ENCODE measurements at regions of chr4 and their contacts with region 1.

Region 1: DNA sequence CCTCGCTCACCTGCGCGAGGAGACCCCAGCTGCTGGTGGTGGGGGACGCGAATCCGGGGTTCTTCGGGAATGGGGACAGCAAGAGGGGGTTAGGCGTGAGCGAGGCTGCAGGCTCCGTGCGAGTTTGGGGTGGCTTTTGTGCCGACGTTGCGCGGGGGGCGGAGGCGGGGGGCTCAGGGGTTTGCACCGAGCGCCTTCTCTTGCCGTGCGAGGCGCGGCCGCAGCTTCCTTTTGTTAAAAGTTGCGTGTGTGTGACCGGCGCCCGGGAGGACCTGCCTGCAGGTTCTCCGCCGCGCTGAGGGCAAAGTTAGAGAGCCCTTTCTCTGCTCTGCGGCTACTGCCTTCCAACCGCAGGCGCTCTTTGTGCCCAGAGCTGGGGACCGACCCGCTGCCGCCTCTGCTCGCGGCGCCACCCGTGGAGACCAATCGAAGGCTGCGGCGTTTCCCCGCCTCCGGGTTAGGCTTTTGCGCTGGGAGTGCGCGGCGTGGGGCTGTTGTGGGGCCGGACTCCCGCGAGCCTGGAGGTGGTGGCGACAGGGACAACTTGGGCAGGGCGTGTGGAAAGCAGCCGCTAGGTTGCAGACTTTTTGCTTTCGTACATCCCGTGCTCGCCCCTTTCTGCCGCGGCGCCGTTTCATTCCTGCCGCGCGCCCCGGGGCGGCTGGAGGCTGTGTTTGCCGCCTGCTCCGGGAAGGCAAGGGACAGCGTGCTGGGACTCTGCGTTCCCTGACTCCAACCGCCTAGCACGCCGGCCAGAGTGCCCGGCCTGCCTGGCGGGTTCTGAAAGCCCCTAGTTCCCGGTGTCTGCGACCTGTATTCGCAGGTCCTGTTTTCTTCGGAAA is 716 bp downstream of the KIT start:
- DNase-seq: peak; percentile 55 to 76 (median 60)
- ATAC-seq: peak; percentile 93
- H3K4me3 ChIP-seq: peak overlapping the region; percentile 52
- H3K27ac ChIP-seq: no peak overlapping the region
- H3K4me1 ChIP-seq: peaks cover 5 to 23% of the 10 kb centered on the region in 2 experiments; a peak in 3 of 5 replicates
- H3K27me3 ChIP-seq: peaks cover 0 to 21% of the 10 kb centered on the region in 2 experiments; a peak in 4 of 5 replicates
- CTCF ChIP-seq: peak; percentile 44 to 75 (median 58); a peak in 5 of 6 replicates
- EP300 ChIP-seq: no peak
- POLR2A ChIP-seq: no peak
- RAD21 ChIP-seq: peak; percentile 29 to 38; a peak in 3 of 4 replicates

Region 2: DNA sequence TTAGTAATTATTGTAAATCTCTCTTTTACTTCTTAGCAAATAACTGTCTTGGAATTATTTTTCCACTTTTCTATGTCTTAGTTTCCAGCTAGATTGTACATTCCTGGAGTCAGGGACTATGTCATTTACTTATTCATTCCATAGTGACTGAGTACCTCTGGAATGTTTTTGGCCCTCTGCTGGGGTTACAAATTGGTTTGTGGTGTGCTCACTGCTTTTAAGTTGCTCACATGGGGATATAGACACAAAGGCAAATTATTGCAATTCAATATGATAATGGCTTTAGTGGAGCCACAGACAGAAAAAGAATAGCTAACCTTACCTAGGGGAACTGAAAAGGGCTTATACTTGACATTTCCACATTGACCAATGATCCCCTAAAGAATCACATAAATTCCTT is 493.0 kb before region 1 on chr4:
- CTCF ChIA-PET with region 1: no interaction called
- POLR2A ChIA-PET with region 1: no interaction called
- in situ Hi-C with region 1: no loop called
- intact Hi-C with region 1: no loop called
- DNase-seq: no peak
- ATAC-seq: no peak
- H3K4me3 ChIP-seq: no peak overlapping the region
- H3K27ac ChIP-seq: no peak overlapping the region
- H3K4me1 ChIP-seq: no peaks in the 10 kb centered on the region
- H3K27me3 ChIP-seq: no peaks in the 10 kb centered on the region; a peak in 1 of 5 replicates
- CTCF ChIP-seq: no peak
- EP300 ChIP-seq: no peak
- POLR2A ChIP-seq: no peak
- RAD21 ChIP-seq: no peak

Region 3: GRCh38 chr4:54539500-54540029 is 118.9 kb before region 1 on chr4:
- CTCF ChIA-PET with region 1: no interaction called
- POLR2A ChIA-PET with region 1: no interaction called
- in situ Hi-C with region 1: no loop called
- intact Hi-C with region 1: loop called (anchors 5 kb)
- DNase-seq: peak; percentile 20 to 64 (median 24)
- ATAC-seq: peak; percentile 69
- H3K4me3 ChIP-seq: peak overlapping the region; percentile 23; the same call in 1 of the 2 replicates
- H3K27ac ChIP-seq: no peak overlapping the region
- H3K4me1 ChIP-seq: peaks cover 19 to 32% of the 10 kb centered on the region in 2 experiments
- H3K27me3 ChIP-seq: no peaks in the 10 kb centered on the region
- CTCF ChIP-seq: no peak
- EP300 ChIP-seq: no peak
- POLR2A ChIP-seq: no peak
- RAD21 ChIP-seq: no peak

Region 4: DNA sequence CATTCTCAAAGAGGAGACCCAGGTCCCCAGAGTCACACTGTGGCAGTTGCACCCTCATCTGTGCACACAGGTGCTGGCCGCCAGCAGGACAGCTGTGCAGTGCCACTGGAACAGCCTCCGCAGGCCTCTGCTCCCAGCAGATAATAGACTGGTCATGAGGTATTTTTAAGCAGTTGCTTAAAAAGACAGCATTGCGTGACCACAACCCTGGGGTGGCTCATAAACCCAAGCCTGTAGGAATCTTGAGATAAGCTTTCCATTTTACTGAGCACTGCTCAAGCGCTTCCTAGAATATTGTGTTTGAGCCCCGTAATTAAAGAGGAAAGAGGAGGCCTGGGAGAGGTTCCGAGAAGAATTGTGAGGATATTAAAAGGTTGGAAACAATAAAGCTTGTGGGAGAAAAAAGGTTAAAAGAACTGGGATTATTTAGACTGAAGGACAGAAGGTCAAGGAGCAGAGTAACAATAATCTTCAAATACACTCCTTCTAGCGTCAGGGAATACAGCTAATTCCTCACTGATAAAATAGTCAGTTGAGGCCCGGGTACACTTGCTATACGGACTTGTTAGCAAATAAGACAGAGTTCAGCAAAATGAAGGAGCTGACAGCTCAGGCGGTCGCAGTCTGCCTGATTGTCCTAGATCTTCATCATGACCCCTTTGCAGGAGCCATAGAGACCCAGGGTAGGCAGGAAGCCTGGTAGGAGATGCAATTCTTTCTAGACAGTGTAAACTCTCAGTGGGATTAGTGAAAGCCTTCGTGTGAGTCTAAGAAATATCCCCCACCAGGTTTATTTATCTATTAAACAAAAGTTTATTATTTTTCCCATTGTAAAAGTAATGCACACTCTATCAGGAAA is 87.0 kb before region 1 on chr4:
- CTCF ChIA-PET with region 1: no interaction called
- POLR2A ChIA-PET with region 1: no interaction called
- in situ Hi-C with region 1: no loop called
- intact Hi-C with region 1: loop called (anchors 5 kb)
- DNase-seq: peak; percentile 73 to 95 (median 84)
- ATAC-seq: peak; percentile 95
- H3K4me3 ChIP-seq: no peak overlapping the region
- H3K27ac ChIP-seq: peak overlapping the region; percentile 76
- H3K4me1 ChIP-seq: peaks cover 15 to 45% of the 10 kb centered on the region in 2 experiments
- H3K27me3 ChIP-seq: no peaks in the 10 kb centered on the region
- CTCF ChIP-seq: peak in 1 of 3 experiments; percentile 24; a peak in 2 of 6 replicates
- EP300 ChIP-seq: peak; percentile 97
- POLR2A ChIP-seq: no peak
- RAD21 ChIP-seq: peak; percentile 33 to 50

Region 5: GRCh38 chr4:54586320-54586955 is 72.0 kb before region 1 on chr4:
- CTCF ChIA-PET with region 1: no interaction called
- POLR2A ChIA-PET with region 1: interaction called, 3 read pairs
- in situ Hi-C with region 1: no loop called
- intact Hi-C with region 1: loop called (anchors 5 kb)
- DNase-seq: peak in 2 of 4 experiments; percentile 28 to 59
- ATAC-seq: peak; percentile 72
- H3K4me3 ChIP-seq: no peak overlapping the region
- H3K27ac ChIP-seq: peak overlapping the region; percentile 67
- H3K4me1 ChIP-seq: peaks cover 0 to 44% of the 10 kb centered on the region in 2 experiments; a peak in 4 of 5 replicates
- H3K27me3 ChIP-seq: no peaks in the 10 kb centered on the region
- CTCF ChIP-seq: no peak
- EP300 ChIP-seq: no peak
- POLR2A ChIP-seq: no peak
- RAD21 ChIP-seq: no peak